ENCODE measurements at regions of chr12 and their contacts with region 1.

Region 1: DNA sequence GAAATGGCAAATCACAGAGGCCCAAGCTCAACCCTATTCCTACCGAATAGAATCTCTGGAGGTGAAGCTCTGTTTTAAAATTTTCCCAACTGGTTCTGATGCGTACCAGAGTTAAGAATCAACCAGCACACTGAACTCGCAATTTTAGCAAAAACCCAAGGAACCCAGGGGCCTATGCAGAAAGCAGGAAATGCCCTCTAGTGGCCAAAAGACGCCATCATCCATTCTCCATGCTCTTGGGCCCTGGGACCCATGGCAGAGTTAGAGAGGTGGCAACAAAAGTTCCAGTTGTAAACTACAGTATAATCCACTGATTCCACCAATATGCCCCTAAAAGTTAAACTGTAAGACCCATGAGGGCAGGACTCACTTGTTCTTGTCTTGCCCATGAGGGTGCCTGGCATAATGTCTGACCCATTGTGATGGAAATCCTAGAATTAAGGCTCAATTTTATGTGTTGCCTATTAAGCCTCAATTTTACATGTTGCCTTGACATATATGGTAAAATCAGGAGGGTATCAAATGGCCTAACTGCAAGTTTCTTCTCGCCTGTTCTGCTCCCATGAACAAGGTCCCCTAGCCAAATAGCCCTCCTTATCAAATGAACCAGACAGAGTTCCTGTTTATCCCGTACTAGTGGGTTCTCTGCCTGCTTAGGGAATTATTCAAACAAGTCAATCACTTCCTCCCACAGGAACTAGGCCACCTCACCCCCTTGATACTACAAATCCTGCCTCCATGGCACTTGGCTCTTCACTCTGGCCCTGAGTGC is 137.5 kb upstream of the CPM start:
- DNase-seq: no peak
- ATAC-seq: peak; percentile 88
- H3K4me3 ChIP-seq: no peak overlapping the region
- H3K27ac ChIP-seq: no peak overlapping the region
- H3K4me1 ChIP-seq: no peaks in the 10 kb centered on the region
- H3K27me3 ChIP-seq: no peaks in the 10 kb centered on the region
- CTCF ChIP-seq: peak; percentile 90

Region 2: DNA sequence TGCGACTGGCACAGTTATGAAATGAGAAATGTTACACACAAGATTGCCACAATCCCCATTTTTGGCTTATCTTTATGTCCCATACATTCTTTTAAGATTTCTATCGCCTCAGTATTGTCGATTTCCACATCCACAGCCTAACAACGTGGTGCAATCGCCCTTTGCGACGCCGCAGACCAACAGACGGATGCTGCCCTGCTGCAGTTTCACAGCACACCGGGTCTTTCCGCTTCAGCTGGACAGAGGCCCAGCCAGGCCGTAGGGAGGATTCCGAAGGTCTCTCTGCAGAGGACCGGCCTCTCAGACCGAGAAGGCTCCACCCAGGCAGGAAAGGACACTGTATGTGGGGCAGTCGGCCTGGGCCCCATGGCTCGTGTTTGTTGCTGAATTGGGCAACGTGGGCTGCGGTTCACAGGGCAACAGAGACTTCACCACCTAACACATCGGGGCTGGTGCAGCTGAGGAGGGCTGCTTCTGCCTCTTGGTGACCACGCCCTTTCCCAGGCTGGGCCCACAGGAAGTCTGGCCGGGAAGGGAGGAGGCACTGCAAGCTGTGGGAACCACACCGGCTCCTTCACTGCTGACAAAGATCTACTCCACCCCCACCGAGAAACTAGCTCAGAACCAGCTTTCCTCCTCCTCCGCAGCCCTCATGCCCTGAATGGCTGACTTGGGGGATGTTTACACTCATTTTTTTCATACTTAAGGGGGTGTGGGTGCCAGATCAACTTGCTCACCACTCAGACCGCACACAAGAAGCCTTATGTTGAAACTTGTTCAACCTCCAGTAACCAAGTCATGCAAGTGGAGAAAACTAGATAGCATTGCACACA is 705.4 kb before region 1 on chr12:
- intact Hi-C with region 1: no loop called
- DNase-seq: peak; percentile 96
- ATAC-seq: peak; percentile 98
- H3K4me3 ChIP-seq: peak overlapping the region; percentile 45
- H3K27ac ChIP-seq: peak overlapping the region; percentile 84
- H3K4me1 ChIP-seq: peaks cover 40% of the 10 kb centered on the region
- H3K27me3 ChIP-seq: no peaks in the 10 kb centered on the region
- CTCF ChIP-seq: no peak

Region 3: DNA sequence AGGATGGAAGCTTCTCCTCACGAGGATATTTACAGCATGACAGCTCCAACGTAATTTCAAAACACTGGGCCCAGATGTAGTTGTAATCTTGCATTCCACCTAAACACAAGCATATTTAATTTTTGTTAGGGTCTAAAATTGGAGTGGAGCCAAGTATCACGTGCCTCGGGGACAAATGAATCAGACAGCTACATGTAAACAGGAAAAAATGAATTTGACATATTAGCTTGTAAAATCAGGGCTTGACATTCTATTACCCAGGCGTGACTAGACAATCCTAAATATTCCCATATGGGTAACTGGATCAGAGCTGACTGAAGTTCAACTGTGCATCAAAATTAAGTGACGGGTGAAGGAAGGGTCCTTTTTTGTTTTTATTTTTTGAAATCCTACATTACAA is 203.6 kb before region 1 on chr12:
- intact Hi-C with region 1: loop called (anchors 10 kb)
- DNase-seq: no peak
- ATAC-seq: no peak
- H3K4me3 ChIP-seq: no peak overlapping the region
- H3K27ac ChIP-seq: no peak overlapping the region
- H3K4me1 ChIP-seq: no peaks in the 10 kb centered on the region
- H3K27me3 ChIP-seq: no peaks in the 10 kb centered on the region
- CTCF ChIP-seq: no peak

Region 4: GRCh38 chr12:69007101-69007854 is 63.2 kb before region 1 on chr12:
- intact Hi-C with region 1: no loop called
- DNase-seq: no peak
- ATAC-seq: peak; percentile 65
- H3K4me3 ChIP-seq: peak overlapping the region; percentile 1
- H3K27ac ChIP-seq: peak overlapping the region; percentile 56
- H3K4me1 ChIP-seq: peaks cover 14% of the 10 kb centered on the region
- H3K27me3 ChIP-seq: no peaks in the 10 kb centered on the region
- CTCF ChIP-seq: no peak

Measured in upper lobe of right lung (tissue), 1 donor.